MCF 10A (cell line): ENCODE measurements at regions of chr1 and their contacts with region 1.

Region 1: GRCh38 chr1:202599677-202600431 is 110.4 kb downstream of the SYT2 start:
- DNase-seq: peak; percentile 89
- H3K4me3 Mint-ChIP-seq: no peak overlapping the region
- H3K27ac Mint-ChIP-seq: no peak overlapping the region
- H3K4me1 Mint-ChIP-seq: peaks cover 2% of the 10 kb centered on the region
- H3K27me3 Mint-ChIP-seq: no peaks in the 10 kb centered on the region
- CTCF ChIP-seq: peak; percentile 99

Region 2: GRCh38 chr1:202462342-202463076 is 137.3 kb before region 1 on chr1:
- CTCF ChIA-PET with region 1: interaction called, 40 read pairs
- POLR2A ChIA-PET with region 1: no interaction called
- intact Hi-C with region 1: loop called (anchors 1 kb)
- DNase-seq: no peak
- H3K4me3 Mint-ChIP-seq: no peak overlapping the region
- H3K27ac Mint-ChIP-seq: no peak overlapping the region
- H3K4me1 Mint-ChIP-seq: peaks cover 24% of the 10 kb centered on the region
- H3K27me3 Mint-ChIP-seq: no peaks in the 10 kb centered on the region
- CTCF ChIP-seq: no peak

Region 3: GRCh38 chr1:202516434-202516877 is 83.4 kb before region 1 on chr1:
- CTCF ChIA-PET with region 1: interaction called, 19 read pairs
- POLR2A ChIA-PET with region 1: no interaction called
- intact Hi-C with region 1: no loop called
- DNase-seq: no peak
- H3K4me3 Mint-ChIP-seq: no peak overlapping the region
- H3K27ac Mint-ChIP-seq: no peak overlapping the region
- H3K4me1 Mint-ChIP-seq: no peaks in the 10 kb centered on the region
- H3K27me3 Mint-ChIP-seq: no peaks in the 10 kb centered on the region
- CTCF ChIP-seq: no peak

Region 4: GRCh38 chr1:202571347-202572339 is 28.2 kb before region 1 on chr1:
- CTCF ChIA-PET with region 1: interaction called, 34 read pairs
- POLR2A ChIA-PET with region 1: interaction called, 8 read pairs
- intact Hi-C with region 1: loop called (anchors 1 kb)
- DNase-seq: peak; percentile 74
- H3K4me3 Mint-ChIP-seq: no peak overlapping the region
- H3K27ac Mint-ChIP-seq: no peak overlapping the region
- H3K4me1 Mint-ChIP-seq: peaks cover 13% of the 10 kb centered on the region
- H3K27me3 Mint-ChIP-seq: no peaks in the 10 kb centered on the region
- CTCF ChIP-seq: peak; percentile 81

Region 5: GRCh38 chr1:202589190-202590030 is 10.4 kb before region 1 on chr1:
- CTCF ChIA-PET with region 1: interaction called, 25 read pairs
- POLR2A ChIA-PET with region 1: interaction called, 3 read pairs
- intact Hi-C with region 1: no loop called
- DNase-seq: peak; percentile 99
- H3K4me3 Mint-ChIP-seq: peak overlapping the region; percentile 20
- H3K27ac Mint-ChIP-seq: peak overlapping the region; percentile 91
- H3K4me1 Mint-ChIP-seq: peaks cover 82% of the 10 kb centered on the region
- H3K27me3 Mint-ChIP-seq: no peaks in the 10 kb centered on the region
- CTCF ChIP-seq: peak; percentile 18

Region 6: GRCh38 chr1:202716654-202717053 is 116.8 kb after region 1 on chr1:
- CTCF ChIA-PET with region 1: interaction called, 35 read pairs
- POLR2A ChIA-PET with region 1: interaction called, 3 read pairs
- intact Hi-C with region 1: loop called (anchors 1 kb)
- DNase-seq: no peak
- H3K4me3 Mint-ChIP-seq: no peak overlapping the region
- H3K27ac Mint-ChIP-seq: no peak overlapping the region
- H3K4me1 Mint-ChIP-seq: no peaks in the 10 kb centered on the region
- H3K27me3 Mint-ChIP-seq: peaks cover 40% of the 10 kb centered on the region
- CTCF ChIP-seq: no peak